ENCODE measurements at regions of chr7 and their contacts with region 1.

Region 1: GRCh38 chr7:76291343-76292212 is 10.9 kb upstream of the HSPB1 start:
- DNase-seq: peak; percentile 66 to 91 (median 86)
- ATAC-seq: peak; percentile 95
- H3K4me3 ChIP-seq: no peak overlapping the region
- H3K4me3 Mint-ChIP-seq: no peak overlapping the region
- H3K27ac ChIP-seq: no peak overlapping the region
- H3K27ac Mint-ChIP-seq: no peak overlapping the region
- H3K4me1 ChIP-seq: no peaks in the 10 kb centered on the region
- H3K4me1 Mint-ChIP-seq: peaks cover 6% of the 10 kb centered on the region
- H3K27me3 ChIP-seq: no peaks in the 10 kb centered on the region
- H3K27me3 Mint-ChIP-seq: no peaks in the 10 kb centered on the region
- CTCF ChIP-seq: peak; percentile 93

Region 2: GRCh38 chr7:76302347-76303201 is 11.0 kb after region 1 on chr7 and contains the start of gene HSPB1:
- CTCF ChIA-PET with region 1: interaction called, 56 read pairs
- POLR2A ChIA-PET with region 1: no interaction called
- intact Hi-C with region 1: loop called in 1 of 2 experiments (anchors 1 kb)
- DNase-seq: peak in 8 of 9 experiments; percentile 43 to 79 (median 68)
- ATAC-seq: peak; percentile 63
- H3K4me3 ChIP-seq: peak within 1 kb of the TSS; percentile 73 to 92
- H3K4me3 Mint-ChIP-seq: peak within 1 kb of the TSS; percentile 90
- H3K27ac ChIP-seq: peak within 1 kb of the TSS; percentile 37 to 46
- H3K27ac Mint-ChIP-seq: peak within 1 kb of the TSS; percentile 67
- H3K4me1 ChIP-seq: peaks cover 11% of the 10 kb centered on the region
- H3K4me1 Mint-ChIP-seq: peaks cover 19% of the 10 kb centered on the region
- H3K27me3 ChIP-seq: no peaks in the 10 kb centered on the region
- H3K27me3 Mint-ChIP-seq: no peaks in the 10 kb centered on the region
- CTCF ChIP-seq: no peak
- total RNA-seq, gene HSPB1: 26.1 to 33.2 TPM

Region 3: DNA sequence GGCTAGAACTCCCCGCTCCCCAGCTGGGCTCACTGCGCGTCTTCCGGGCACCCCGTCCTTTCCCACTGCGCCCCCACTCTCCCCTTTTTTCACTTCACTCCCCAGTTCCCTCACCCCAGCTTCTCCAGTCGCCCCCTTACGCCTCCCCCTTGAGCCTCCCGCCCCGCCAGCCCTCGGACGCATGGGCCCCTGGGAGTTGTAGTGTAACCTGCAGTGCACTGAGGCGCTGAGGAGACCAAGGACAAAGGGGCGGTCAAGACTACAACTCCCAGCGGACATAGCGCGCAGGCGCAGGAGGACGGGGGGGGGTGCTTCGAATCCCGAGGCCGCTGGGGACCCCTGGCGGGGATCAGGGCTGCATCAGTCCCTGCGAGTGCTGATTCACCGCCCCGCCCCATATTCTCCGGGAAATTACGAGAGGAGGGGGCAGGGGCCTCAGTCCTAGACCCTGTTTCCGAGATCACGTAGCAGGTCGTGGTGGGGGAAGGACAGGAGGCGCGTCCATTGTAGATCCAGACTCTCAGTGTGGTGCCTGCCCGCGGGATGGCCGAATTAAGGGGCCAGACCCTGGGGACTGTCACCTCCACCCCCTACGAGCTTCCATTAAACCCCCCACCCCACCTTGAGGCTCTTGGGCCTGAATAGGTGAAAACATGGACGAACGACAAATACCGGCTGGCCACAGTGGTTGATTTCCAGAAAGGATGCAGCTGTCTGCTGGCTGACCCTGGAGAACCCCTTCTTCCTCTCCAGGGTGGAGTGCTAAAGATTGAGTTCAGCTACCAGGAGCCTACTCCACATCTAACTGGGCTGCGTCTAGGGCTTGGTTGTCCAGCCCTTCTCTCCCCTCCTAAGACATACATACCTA is 67.8 kb after region 1 on chr7:
- CTCF ChIA-PET with region 1: no interaction called
- POLR2A ChIA-PET with region 1: no interaction called
- intact Hi-C with region 1: loop called (anchors 1 kb)
- DNase-seq: peak; percentile 86 to 98 (median 95)
- ATAC-seq: peak; percentile 90
- H3K4me3 ChIP-seq: peak overlapping the region; percentile 94 to 99
- H3K4me3 Mint-ChIP-seq: peak overlapping the region; percentile 96
- H3K27ac ChIP-seq: peak overlapping the region; percentile 96
- H3K27ac Mint-ChIP-seq: peak overlapping the region; percentile 94
- H3K4me1 ChIP-seq: peaks cover 28% of the 10 kb centered on the region
- H3K4me1 Mint-ChIP-seq: peaks cover 39% of the 10 kb centered on the region
- H3K27me3 ChIP-seq: no peaks in the 10 kb centered on the region
- H3K27me3 Mint-ChIP-seq: no peaks in the 10 kb centered on the region
- CTCF ChIP-seq: peak; percentile 54